ENCODE measurements at regions of chr5 and their contacts with region 1.

Region 1: DNA sequence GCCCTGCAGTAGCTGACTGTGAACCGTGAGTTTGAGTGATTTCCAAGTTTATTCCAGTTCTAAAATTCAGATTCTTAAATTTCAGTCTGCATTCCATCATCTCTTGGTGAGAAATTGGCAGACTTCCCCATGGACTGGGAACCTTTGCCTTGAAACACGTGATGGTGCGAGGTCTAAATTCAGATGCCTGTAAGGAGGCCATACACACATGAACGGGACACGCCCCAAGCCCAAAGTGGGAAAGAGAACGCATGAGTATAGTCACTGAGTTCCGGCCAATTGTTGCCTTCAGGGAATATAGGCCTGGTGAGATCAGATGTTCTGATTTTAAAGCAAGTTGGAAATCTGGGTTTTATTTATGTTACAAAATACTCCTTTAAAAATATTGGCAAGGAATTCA is 1084.4 kb upstream of the WWC1 start:
- DNase-seq: no peak
- ATAC-seq: no peak
- H3K4me3 ChIP-seq: no peak overlapping the region
- H3K4me3 Mint-ChIP-seq: no peak overlapping the region
- H3K27ac ChIP-seq: no peak overlapping the region
- H3K27ac Mint-ChIP-seq: no peak overlapping the region
- H3K4me1 ChIP-seq: no peaks in the 10 kb centered on the region
- H3K4me1 Mint-ChIP-seq: no peaks in the 10 kb centered on the region
- H3K27me3 ChIP-seq: no peaks in the 10 kb centered on the region
- H3K27me3 Mint-ChIP-seq: no peaks in the 10 kb centered on the region
- CTCF ChIP-seq: no peak

Region 2: GRCh38 chr5:166834246-166834645 is 372.8 kb before region 1 on chr5:
- CTCF ChIA-PET with region 1: no interaction called
- POLR2A ChIA-PET with region 1: no interaction called
- intact Hi-C with region 1: loop called in 1 of 2 experiments (anchors 5 kb)
- DNase-seq: no peak
- ATAC-seq: no peak
- H3K4me3 ChIP-seq: no peak overlapping the region
- H3K4me3 Mint-ChIP-seq: no peak overlapping the region
- H3K27ac ChIP-seq: no peak overlapping the region
- H3K27ac Mint-ChIP-seq: no peak overlapping the region
- H3K4me1 ChIP-seq: no peaks in the 10 kb centered on the region
- H3K4me1 Mint-ChIP-seq: no peaks in the 10 kb centered on the region
- H3K27me3 ChIP-seq: no peaks in the 10 kb centered on the region
- H3K27me3 Mint-ChIP-seq: no peaks in the 10 kb centered on the region
- CTCF ChIP-seq: no peak

Region 3: DNA sequence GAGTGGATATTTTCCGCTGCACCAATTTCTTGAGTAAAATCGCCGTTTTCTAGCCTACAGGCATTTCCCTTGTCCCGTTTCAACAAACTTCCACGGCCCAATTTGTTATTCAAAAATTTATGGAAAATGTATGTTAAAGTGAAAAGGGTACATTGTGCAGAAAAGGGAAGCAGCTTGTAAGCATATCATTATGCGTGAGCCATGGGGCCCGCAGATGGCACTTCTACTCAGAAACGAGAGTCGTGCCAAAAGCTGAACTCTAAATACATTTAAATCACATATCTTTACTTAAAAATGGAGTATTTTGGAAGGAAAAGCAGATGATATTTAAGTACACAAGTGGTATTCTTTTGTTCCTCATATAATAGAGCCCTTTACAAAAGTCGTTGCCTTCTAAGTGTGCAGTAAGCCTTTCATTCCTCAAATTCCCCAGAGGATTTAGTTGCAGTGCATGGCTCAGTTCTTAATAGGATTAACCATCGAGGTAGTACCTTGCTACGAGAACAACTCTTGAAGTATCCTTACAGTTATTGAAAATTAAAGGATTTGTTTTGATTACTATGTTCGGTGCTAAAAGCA is 142.8 kb before region 1 on chr5:
- CTCF ChIA-PET with region 1: no interaction called
- POLR2A ChIA-PET with region 1: no interaction called
- intact Hi-C with region 1: no loop called
- DNase-seq: no peak
- ATAC-seq: no peak
- H3K4me3 ChIP-seq: no peak overlapping the region
- H3K4me3 Mint-ChIP-seq: no peak overlapping the region
- H3K27ac ChIP-seq: no peak overlapping the region
- H3K27ac Mint-ChIP-seq: no peak overlapping the region
- H3K4me1 ChIP-seq: no peaks in the 10 kb centered on the region
- H3K4me1 Mint-ChIP-seq: no peaks in the 10 kb centered on the region
- H3K27me3 ChIP-seq: no peaks in the 10 kb centered on the region
- H3K27me3 Mint-ChIP-seq: no peaks in the 10 kb centered on the region
- CTCF ChIP-seq: no peak